ENCODE measurements at regions of chr1 and their contacts with region 1.

Region 1: DNA sequence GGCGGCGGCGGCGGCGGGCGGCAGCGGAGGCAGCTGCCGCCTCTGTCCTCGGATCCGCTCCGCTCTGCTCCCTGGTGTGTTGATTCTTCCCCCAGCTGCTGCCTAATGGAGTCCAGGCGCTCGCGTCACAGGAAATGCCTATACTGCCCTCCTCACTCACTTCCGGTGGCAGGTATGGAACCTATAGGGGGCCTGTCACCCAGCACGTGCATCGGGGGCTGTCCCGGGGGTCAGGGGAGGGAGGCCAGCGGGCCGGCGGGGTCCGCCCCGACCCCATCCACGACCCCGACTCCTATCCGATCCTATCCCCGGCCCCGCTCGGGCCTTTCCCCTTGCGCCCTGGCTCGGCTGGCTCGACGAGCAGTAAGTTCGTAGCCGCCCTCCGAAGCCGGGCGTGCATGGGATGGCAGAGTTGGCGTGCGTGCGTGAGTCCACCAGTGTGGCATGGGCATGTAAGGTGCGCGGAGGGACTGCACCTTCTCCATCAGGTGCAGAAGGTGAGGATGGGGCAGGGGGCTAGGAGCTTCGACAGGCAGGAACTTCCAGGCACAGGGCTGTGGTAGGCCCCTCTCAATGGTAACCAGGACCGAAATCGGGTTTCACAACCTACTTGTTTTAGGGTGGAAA is at the start of gene WDR26:
- H3K4me3 Mint-ChIP-seq: peak within 1 kb of the TSS; percentile 94
- H3K27ac Mint-ChIP-seq: peak within 1 kb of the TSS; percentile 96
- H3K4me1 Mint-ChIP-seq: peaks cover 33% of the 10 kb centered on the region
- H3K27me3 Mint-ChIP-seq: no peaks in the 10 kb centered on the region

Region 2: GRCh38 chr1:224503161-224504118 is 68.6 kb after region 1 on chr1:
- intact Hi-C with region 1: loop called (anchors 2 kb)
- H3K4me3 Mint-ChIP-seq: peak overlapping the region; percentile 69
- H3K27ac Mint-ChIP-seq: peak overlapping the region; percentile 95
- H3K4me1 Mint-ChIP-seq: peaks cover 78% of the 10 kb centered on the region
- H3K27me3 Mint-ChIP-seq: no peaks in the 10 kb centered on the region